Activated T-helper 1 cell treated with anti-CD3 and anti-CD28 coated beads, Interleukin-12 subunit alpha, Interleukin-12 subunit beta, Interleukin-2, Interleukin-4 antibody, amounts not matched to agents 30 ng/mL and 10 ng/mL and 1 ng/mL, durations not matched to agents 14 hours and 24 hours and 36 hours (primary cell): ENCODE measurements at regions of chr12 and their contacts with region 1.

Region 1: GRCh38 chr12:26097046-26097878 is 27.6 kb downstream of the BHLHE41 start:
- DNase-seq: peak; percentile 14
- H3K4me3 Mint-ChIP-seq: no peak overlapping the region
- H3K27ac Mint-ChIP-seq: no peak overlapping the region
- H3K4me1 Mint-ChIP-seq: no peaks in the 10 kb centered on the region
- H3K27me3 Mint-ChIP-seq: peaks cover 26% of the 10 kb centered on the region

Region 2: GRCh38 chr12:26523708-26524150 is 426.5 kb after region 1 on chr12:
- intact Hi-C with region 1: loop called (anchors 2 kb)
- DNase-seq: no peak
- H3K4me3 Mint-ChIP-seq: no peak overlapping the region
- H3K27ac Mint-ChIP-seq: no peak overlapping the region
- H3K4me1 Mint-ChIP-seq: peaks cover 14% of the 10 kb centered on the region
- H3K27me3 Mint-ChIP-seq: no peaks in the 10 kb centered on the region

Region 3: DNA sequence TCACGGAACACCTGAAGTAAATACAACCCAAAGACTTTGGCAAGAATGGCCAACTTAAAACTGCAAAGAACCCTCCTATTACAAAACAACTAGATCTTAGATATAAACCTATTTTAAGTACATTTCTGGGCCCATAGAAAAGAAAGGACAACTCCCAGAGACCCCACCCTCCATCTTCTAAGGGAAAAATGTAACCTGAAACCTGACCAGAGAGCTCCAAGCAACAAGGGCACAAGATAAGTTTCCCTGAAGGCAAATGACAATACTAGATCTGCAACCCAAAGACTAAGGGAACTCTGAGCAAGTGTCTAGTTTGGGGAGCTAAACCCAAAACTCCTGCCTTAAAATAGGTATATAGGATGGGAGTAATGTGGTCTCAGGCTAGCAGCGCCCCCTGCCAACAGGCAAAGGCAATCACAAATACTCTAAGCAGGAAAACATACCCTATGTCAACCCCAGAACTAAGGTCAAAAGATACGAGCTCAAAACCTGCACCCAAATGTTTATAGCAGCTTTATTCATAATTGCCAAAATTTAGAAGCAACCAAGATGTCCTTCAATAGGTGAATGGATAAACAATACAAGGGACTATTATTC is 516.9 kb after region 1 on chr12:
- intact Hi-C with region 1: loop called (anchors 1 kb)
- DNase-seq: no peak
- H3K4me3 Mint-ChIP-seq: no peak overlapping the region
- H3K27ac Mint-ChIP-seq: no peak overlapping the region
- H3K4me1 Mint-ChIP-seq: no peaks in the 10 kb centered on the region
- H3K27me3 Mint-ChIP-seq: no peaks in the 10 kb centered on the region

Region 4: GRCh38 chr12:26651566-26652188 is 554.4 kb after region 1 on chr12:
- intact Hi-C with region 1: loop called (anchors 1 kb)
- DNase-seq: peak; percentile 14
- H3K4me3 Mint-ChIP-seq: no peak overlapping the region
- H3K27ac Mint-ChIP-seq: no peak overlapping the region
- H3K4me1 Mint-ChIP-seq: peaks cover 10% of the 10 kb centered on the region
- H3K27me3 Mint-ChIP-seq: no peaks in the 10 kb centered on the region

Region 5: DNA sequence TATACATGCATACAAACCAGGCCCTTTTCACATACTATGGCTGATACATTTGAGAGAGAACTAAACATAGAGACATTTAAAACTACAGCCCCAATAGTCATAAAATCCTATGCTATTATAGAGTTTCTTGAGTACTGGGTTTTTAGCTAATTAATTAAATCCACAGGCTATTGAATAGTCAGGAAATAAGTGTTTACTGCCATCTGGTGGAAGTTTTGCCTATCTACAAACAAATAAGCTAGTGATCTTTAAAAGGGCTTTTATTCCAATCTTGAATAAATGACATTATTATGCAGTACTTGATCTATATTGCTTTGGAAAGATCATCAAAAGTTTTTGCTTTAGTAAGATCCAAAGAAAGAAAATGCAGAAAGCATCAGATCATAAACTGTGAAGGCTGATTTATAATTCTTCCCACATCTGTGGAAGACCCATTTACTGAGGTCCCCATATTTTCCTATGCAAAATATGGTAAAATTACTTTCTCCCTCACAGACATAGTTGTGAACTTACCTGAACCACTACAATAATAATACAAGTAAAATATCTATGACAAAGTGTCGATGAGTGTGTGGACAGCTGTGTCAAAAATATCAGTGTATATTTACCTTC is 604.4 kb after region 1 on chr12:
- intact Hi-C with region 1: loop called (anchors 1 kb)
- DNase-seq: no peak
- H3K4me3 Mint-ChIP-seq: no peak overlapping the region
- H3K27ac Mint-ChIP-seq: no peak overlapping the region
- H3K4me1 Mint-ChIP-seq: peaks cover 9% of the 10 kb centered on the region
- H3K27me3 Mint-ChIP-seq: no peaks in the 10 kb centered on the region

Region 6: GRCh38 chr12:26853303-26854030 is 756.2 kb after region 1 on chr12:
- intact Hi-C with region 1: loop called (anchors 5 kb)
- DNase-seq: peak; percentile 50
- H3K4me3 Mint-ChIP-seq: no peak overlapping the region
- H3K27ac Mint-ChIP-seq: no peak overlapping the region
- H3K4me1 Mint-ChIP-seq: no peaks in the 10 kb centered on the region
- H3K27me3 Mint-ChIP-seq: peaks cover 14% of the 10 kb centered on the region

Region 7: GRCh38 chr12:26884765-26885576 is 787.7 kb after region 1 on chr12:
- intact Hi-C with region 1: loop called (anchors 5 kb)
- DNase-seq: peak; percentile 78
- H3K4me3 Mint-ChIP-seq: peak overlapping the region; percentile 23
- H3K27ac Mint-ChIP-seq: no peak overlapping the region
- H3K4me1 Mint-ChIP-seq: peaks cover 8% of the 10 kb centered on the region
- H3K27me3 Mint-ChIP-seq: peaks cover 16% of the 10 kb centered on the region